ENCODE measurements at regions of chr5 and their contacts with region 1.

Region 1: GRCh38 chr5:138352071-138352721 is at the start of gene KDM3B:
- DNase-seq: peak; percentile 94
- H3K4me3 Mint-ChIP-seq: peak within 1 kb of the TSS; percentile 94
- H3K27ac Mint-ChIP-seq: peak within 1 kb of the TSS; percentile 91
- H3K4me1 Mint-ChIP-seq: peaks cover 42% of the 10 kb centered on the region
- H3K27me3 Mint-ChIP-seq: no peaks in the 10 kb centered on the region
- total RNA-seq, gene KDM3B: 51.9 to 57.9 TPM

Region 2: GRCh38 chr5:138178516-138179276 is 173.5 kb before region 1 on chr5 and contains the starts of genes BRD8 and KIF20A:
- CTCF ChIA-PET with region 1: interaction called, 59 read pairs
- POLR2A ChIA-PET with region 1: interaction called, 44 read pairs
- DNase-seq: peak; percentile 94
- H3K4me3 Mint-ChIP-seq: no peak within 1 kb of the TSS
- H3K27ac Mint-ChIP-seq: no peak within 1 kb of the TSS
- H3K4me1 Mint-ChIP-seq: peaks cover 36% of the 10 kb centered on the region
- H3K27me3 Mint-ChIP-seq: no peaks in the 10 kb centered on the region
- total RNA-seq, gene BRD8: 62.9 to 72.7 TPM
- total RNA-seq, gene KIF20A: 50.7 to 55.7 TPM

Region 3: DNA sequence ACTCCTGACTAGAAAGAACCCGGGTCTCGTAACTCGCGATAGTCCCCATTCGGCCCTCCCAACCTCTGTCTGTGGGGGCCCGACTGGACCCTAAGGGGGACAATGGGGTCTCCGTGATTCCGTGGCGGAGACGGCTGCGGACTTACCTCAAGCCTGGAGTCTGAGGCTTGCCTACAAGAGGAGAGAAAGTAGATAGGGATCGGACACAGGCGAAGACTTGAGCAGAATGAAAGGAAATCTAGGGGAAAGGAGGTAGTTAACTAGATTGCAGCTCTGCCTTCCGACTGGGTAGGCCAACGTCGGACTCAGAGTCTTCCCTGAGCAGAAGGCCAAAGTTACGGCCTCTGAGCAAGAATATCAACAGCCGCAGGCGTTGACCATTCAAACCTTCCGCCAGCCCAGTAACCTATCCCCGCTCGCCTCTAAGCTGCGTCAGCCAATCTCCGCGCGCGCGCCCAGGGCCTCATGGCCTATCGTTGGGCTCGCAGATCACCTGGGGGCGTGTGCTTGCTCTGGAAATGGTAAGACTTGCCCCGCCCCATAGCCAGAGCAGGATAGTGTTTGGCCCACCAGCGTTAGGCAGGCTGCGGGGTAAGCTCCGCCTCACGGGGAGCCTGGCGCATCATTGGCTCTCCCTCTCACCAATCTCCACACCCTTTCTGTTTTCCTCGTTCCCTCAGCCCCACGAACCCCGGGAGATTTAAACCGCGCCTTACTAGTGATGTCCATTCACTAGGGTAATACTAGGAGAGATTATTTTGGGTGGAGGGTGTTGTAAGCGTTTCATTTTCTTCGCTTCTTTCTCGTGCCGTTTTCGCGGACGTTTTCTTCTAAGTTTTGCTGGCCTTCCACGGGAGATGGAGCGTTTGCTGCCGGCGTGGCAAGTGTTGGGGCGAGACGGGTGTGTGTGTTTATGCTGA is 20.5 kb before region 1 on chr5 and contains the start of gene CDC25C:
- CTCF ChIA-PET with region 1: interaction called, 387 read pairs
- POLR2A ChIA-PET with region 1: interaction called, 182 read pairs
- DNase-seq: peak; percentile 98
- H3K4me3 Mint-ChIP-seq: peak within 1 kb of the TSS; percentile 83
- H3K27ac Mint-ChIP-seq: peak within 1 kb of the TSS; percentile 62
- H3K4me1 Mint-ChIP-seq: peaks cover 33% of the 10 kb centered on the region
- H3K27me3 Mint-ChIP-seq: no peaks in the 10 kb centered on the region
- total RNA-seq, gene CDC25C: 15.2 to 18.4 TPM

Region 4: DNA sequence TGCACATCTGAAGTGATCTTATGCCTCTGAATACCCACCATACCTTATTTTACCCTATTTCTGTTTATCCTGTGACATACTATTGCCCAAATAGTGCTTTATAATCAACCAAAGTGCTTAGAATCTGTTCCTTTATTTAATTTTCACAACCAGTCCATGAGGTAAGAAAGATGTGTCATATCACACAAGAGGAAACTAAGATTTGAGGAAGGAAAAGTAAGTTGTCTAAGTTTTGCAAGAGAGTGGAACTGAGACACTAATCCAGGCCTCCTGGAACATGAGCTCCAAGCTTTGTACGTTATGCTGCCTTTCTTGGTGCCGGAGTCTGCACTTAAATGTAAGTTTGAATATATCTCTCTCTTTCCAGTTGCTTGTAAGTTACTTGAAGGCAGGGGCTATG is 17.5 kb after region 1 on chr5:
- CTCF ChIA-PET with region 1: interaction called, 77 read pairs
- POLR2A ChIA-PET with region 1: interaction called, 29 read pairs
- DNase-seq: no peak
- H3K4me3 Mint-ChIP-seq: no peak overlapping the region
- H3K27ac Mint-ChIP-seq: no peak overlapping the region
- H3K4me1 Mint-ChIP-seq: peaks cover 14% of the 10 kb centered on the region
- H3K27me3 Mint-ChIP-seq: no peaks in the 10 kb centered on the region

Region 5: DNA sequence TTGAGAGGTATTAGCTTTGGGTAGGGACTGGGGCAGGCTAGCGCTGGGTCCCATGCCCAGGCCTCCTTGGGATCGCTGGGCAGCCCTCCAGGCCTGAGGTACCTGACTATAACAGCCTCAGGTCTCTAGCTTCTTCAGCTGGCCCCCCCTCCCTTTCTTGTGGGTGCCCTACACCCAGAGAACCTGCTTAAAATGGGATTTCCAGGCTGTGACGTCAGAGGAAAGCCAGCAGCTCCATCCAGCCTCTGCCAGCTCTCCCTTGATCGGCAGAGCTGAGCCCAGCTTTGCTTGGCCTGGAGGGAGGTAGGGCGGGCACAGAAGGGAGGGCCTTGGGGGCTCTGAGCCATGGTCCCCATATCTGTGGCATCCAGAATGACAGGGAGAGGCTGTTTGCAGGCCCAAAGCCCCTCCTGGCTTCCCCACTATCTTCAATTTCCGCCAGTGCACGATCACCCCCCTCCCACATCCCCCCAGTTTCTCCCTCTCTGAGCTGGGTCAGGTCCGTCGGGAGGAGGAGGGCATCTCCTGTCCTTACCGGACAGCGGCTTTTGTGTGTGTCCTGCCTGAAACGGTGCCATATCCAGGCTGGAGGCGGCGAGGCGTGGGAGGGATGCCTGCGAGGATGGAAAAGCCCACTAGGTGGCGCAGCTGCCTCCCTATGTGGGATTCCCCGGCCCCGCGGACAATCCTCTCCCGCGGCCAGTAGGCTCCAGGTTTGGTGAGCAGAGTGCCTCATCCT is 97.5 kb after region 1 on chr5:
- CTCF ChIA-PET with region 1: interaction called, 18 read pairs
- POLR2A ChIA-PET with region 1: no interaction called
- DNase-seq: peak; percentile 82
- H3K4me3 Mint-ChIP-seq: no peak overlapping the region
- H3K27ac Mint-ChIP-seq: no peak overlapping the region
- H3K4me1 Mint-ChIP-seq: peaks cover 5% of the 10 kb centered on the region
- H3K27me3 Mint-ChIP-seq: peaks cover 3% of the 10 kb centered on the region

Region 6: DNA sequence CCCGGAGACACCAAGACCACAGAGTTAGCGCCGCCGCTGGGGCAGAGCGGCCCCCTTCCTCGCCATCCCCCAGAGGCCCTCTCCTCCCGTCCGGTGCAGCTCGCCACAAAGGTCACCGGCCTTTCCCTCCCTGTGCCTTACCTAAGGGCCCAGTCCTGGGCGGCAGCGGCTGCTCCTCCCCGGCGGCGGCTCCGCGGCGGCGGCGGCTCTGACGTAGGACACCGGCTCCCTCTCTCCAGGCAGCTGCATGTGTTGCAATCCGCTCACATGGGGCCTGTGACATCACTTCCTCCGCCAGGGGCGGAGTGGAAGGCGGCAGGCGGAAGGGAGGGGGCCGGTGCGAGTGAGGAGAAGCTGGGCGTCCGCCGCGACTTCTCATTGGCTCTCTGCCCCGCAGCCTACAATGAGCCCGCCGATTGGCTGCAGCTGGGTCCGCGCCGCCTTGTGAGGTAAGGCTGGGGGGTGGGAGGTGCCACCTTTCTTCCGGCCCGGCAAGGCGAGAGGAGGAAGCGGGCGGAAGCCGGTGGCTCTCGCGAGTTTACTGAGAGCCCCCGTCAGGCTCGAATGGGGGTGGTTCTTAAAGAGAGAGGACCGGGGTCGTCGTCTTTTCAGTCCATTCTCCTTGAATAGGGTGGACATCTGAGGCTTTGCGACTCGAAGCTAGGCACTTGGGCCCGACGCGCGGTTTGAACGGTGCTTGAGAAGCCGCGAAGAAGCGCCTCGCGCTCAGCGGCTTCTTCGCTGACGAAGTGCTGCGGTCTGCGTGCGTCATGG is 190.9 kb after region 1 on chr5 and contains the start of gene ETF1:
- CTCF ChIA-PET with region 1: interaction called, 22 read pairs
- POLR2A ChIA-PET with region 1: interaction called, 35 read pairs
- DNase-seq: peak; percentile 100
- H3K4me3 Mint-ChIP-seq: peak within 1 kb of the TSS; percentile 96
- H3K27ac Mint-ChIP-seq: peak within 1 kb of the TSS; percentile 99
- H3K4me1 Mint-ChIP-seq: peaks cover 64% of the 10 kb centered on the region
- H3K27me3 Mint-ChIP-seq: no peaks in the 10 kb centered on the region
- total RNA-seq, gene ETF1: 77.5 to 81.7 TPM